CD4-positive, alpha-beta T cell (primary cell): ENCODE measurements at regions of chr2 and their contacts with region 1.

Region 1: GRCh38 chr2:100984892-100985379 is 17.2 kb upstream of the RPL31 start:
- DNase-seq: peak; percentile 69 to 89 (median 76)
- ATAC-seq: peak; percentile 89
- H3K4me3 ChIP-seq: no peak overlapping the region
- H3K4me3 Mint-ChIP-seq: no peak overlapping the region
- H3K27ac ChIP-seq: no peak overlapping the region
- H3K27ac Mint-ChIP-seq: no peak overlapping the region
- H3K4me1 ChIP-seq: no peaks in the 10 kb centered on the region
- H3K4me1 Mint-ChIP-seq: no peaks in the 10 kb centered on the region
- H3K27me3 ChIP-seq: no peaks in the 10 kb centered on the region
- H3K27me3 Mint-ChIP-seq: no peaks in the 10 kb centered on the region
- CTCF ChIP-seq: peak; percentile 95

Region 2: DNA sequence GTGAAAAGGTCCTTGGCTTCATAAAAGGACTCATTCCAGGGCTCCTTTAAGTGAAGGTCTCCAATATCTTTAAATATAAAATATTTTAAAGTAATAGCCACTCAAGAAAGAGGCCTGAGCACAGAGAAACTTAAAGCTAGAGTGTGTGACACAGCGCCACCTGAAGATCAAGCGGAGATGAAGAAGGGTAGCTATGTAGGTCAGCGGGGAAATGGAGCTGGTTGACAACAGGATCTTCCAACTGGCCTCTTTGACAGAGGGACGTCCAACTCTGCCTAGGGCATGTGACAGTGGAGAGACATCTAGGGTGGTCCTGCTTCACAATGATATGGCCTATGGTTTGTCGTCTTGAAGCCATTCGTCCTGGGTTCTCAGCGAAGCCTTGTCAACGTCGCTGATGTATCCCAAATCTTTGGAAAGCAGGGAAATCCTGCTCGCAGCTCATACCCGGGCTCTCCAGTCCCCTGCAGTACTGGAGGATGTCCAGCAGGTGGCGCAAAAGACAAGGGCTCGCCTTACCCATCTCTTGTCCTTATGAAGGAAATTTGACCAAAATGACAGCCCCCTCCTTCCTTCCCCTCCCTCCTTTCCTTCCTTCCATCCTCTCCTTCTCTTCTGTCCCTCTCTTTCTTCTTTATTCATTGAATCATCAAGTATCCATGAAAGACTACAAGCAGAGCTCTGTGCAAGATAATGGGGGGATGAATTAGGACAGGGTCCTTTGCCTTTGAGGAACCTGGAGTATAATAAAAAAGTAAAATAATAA is 722.2 kb before region 1 on chr2:
- CTCF ChIA-PET with region 1: no interaction called
- POLR2A ChIA-PET with region 1: no interaction called
- intact Hi-C with region 1: loop called (anchors 5 kb)
- DNase-seq: peak; percentile 19 to 70 (median 44)
- ATAC-seq: peak; percentile 62
- H3K4me3 ChIP-seq: no peak overlapping the region
- H3K4me3 Mint-ChIP-seq: no peak overlapping the region
- H3K27ac ChIP-seq: no peak overlapping the region
- H3K27ac Mint-ChIP-seq: no peak overlapping the region
- H3K4me1 ChIP-seq: no peaks in the 10 kb centered on the region
- H3K4me1 Mint-ChIP-seq: no peaks in the 10 kb centered on the region
- H3K27me3 ChIP-seq: no peaks in the 10 kb centered on the region
- H3K27me3 Mint-ChIP-seq: no peaks in the 10 kb centered on the region
- CTCF ChIP-seq: peak; percentile 89

Region 3: GRCh38 chr2:100427628-100428258 is 557.2 kb before region 1 on chr2:
- CTCF ChIA-PET with region 1: no interaction called
- POLR2A ChIA-PET with region 1: no interaction called
- intact Hi-C with region 1: loop called (anchors 5 kb)
- DNase-seq: peak; percentile 55 to 77 (median 65)
- ATAC-seq: peak; percentile 79
- H3K4me3 ChIP-seq: no peak overlapping the region
- H3K4me3 Mint-ChIP-seq: no peak overlapping the region
- H3K27ac ChIP-seq: no peak overlapping the region
- H3K27ac Mint-ChIP-seq: no peak overlapping the region
- H3K4me1 ChIP-seq: peaks cover 2% of the 10 kb centered on the region
- H3K4me1 Mint-ChIP-seq: peaks cover 7% of the 10 kb centered on the region
- H3K27me3 ChIP-seq: no peaks in the 10 kb centered on the region
- H3K27me3 Mint-ChIP-seq: peaks cover 15% of the 10 kb centered on the region
- CTCF ChIP-seq: peak; percentile 66

Region 4: GRCh38 chr2:100494712-100495111 is 490.2 kb before region 1 on chr2:
- CTCF ChIA-PET with region 1: no interaction called
- POLR2A ChIA-PET with region 1: no interaction called
- intact Hi-C with region 1: no loop called
- DNase-seq: no peak
- ATAC-seq: no peak
- H3K4me3 ChIP-seq: no peak overlapping the region
- H3K4me3 Mint-ChIP-seq: no peak overlapping the region
- H3K27ac ChIP-seq: no peak overlapping the region
- H3K27ac Mint-ChIP-seq: no peak overlapping the region
- H3K4me1 ChIP-seq: no peaks in the 10 kb centered on the region
- H3K4me1 Mint-ChIP-seq: no peaks in the 10 kb centered on the region
- H3K27me3 ChIP-seq: peaks cover under 1 to 3% of the 10 kb centered on the region in 2 experiments
- H3K27me3 Mint-ChIP-seq: peaks cover 9% of the 10 kb centered on the region
- CTCF ChIP-seq: no peak

Region 5: DNA sequence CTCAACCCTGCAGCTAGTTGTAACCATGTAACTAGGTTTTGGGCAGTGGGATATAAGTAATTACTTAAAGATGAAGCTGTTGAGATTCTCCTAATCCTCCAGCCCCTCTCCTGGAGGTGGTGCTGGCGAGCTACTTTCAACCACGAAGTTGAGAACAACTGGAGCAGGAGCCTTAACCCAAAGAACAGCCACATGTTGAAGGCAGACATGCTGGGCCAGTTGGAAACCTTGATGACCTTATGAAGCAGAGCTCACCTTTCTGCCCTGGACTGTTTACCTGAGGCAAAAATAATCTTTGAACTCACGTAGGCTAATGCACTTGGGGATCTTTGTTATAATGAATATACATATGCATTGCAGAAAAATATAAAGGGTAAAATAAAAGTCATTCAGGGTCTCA is 254.6 kb before region 1 on chr2:
- CTCF ChIA-PET with region 1: no interaction called
- POLR2A ChIA-PET with region 1: no interaction called
- intact Hi-C with region 1: loop called (anchors 1 to 2 kb)
- DNase-seq: peak in 12 of 14 experiments; percentile 7 to 50 (median 26)
- ATAC-seq: no peak
- H3K4me3 ChIP-seq: no peak overlapping the region
- H3K4me3 Mint-ChIP-seq: no peak overlapping the region
- H3K27ac ChIP-seq: no peak overlapping the region
- H3K27ac Mint-ChIP-seq: no peak overlapping the region
- H3K4me1 ChIP-seq: no peaks in the 10 kb centered on the region
- H3K4me1 Mint-ChIP-seq: no peaks in the 10 kb centered on the region
- H3K27me3 ChIP-seq: no peaks in the 10 kb centered on the region
- H3K27me3 Mint-ChIP-seq: peaks cover 28% of the 10 kb centered on the region
- CTCF ChIP-seq: no peak

Region 6: GRCh38 chr2:100818606-100819369 is 166.1 kb before region 1 on chr2:
- CTCF ChIA-PET with region 1: no interaction called
- POLR2A ChIA-PET with region 1: no interaction called
- intact Hi-C with region 1: loop called (anchors 10 kb)
- DNase-seq: peak in 7 of 14 experiments; percentile 5 to 37 (median 17)
- ATAC-seq: peak; percentile 24
- H3K4me3 ChIP-seq: peak overlapping the region; percentile 50
- H3K4me3 Mint-ChIP-seq: peak overlapping the region; percentile 87
- H3K27ac ChIP-seq: no peak overlapping the region
- H3K27ac Mint-ChIP-seq: peak overlapping the region; percentile 69
- H3K4me1 ChIP-seq: peaks cover 22% of the 10 kb centered on the region
- H3K4me1 Mint-ChIP-seq: peaks cover 25% of the 10 kb centered on the region
- H3K27me3 ChIP-seq: peaks cover 15 to 19% of the 10 kb centered on the region in 2 experiments
- H3K27me3 Mint-ChIP-seq: peaks cover 39% of the 10 kb centered on the region
- CTCF ChIP-seq: no peak